ENCODE measurements at regions of chr9 and their contacts with region 1.

Region 1: GRCh38 chr9:130693426-130694191 is at the start of gene EXOSC2:
- DNase-seq: peak; percentile 99
- H3K4me3 ChIP-seq: peak within 1 kb of the TSS; percentile 88
- H3K27ac ChIP-seq: peak within 1 kb of the TSS; percentile 83
- H3K4me1 ChIP-seq: peaks cover 14% of the 10 kb centered on the region
- H3K27me3 ChIP-seq: no peaks in the 10 kb centered on the region
- CTCF ChIP-seq: no peak
- total RNA-seq, gene EXOSC2: 107 and 109 TPM in 2 replicates

Region 2: DNA sequence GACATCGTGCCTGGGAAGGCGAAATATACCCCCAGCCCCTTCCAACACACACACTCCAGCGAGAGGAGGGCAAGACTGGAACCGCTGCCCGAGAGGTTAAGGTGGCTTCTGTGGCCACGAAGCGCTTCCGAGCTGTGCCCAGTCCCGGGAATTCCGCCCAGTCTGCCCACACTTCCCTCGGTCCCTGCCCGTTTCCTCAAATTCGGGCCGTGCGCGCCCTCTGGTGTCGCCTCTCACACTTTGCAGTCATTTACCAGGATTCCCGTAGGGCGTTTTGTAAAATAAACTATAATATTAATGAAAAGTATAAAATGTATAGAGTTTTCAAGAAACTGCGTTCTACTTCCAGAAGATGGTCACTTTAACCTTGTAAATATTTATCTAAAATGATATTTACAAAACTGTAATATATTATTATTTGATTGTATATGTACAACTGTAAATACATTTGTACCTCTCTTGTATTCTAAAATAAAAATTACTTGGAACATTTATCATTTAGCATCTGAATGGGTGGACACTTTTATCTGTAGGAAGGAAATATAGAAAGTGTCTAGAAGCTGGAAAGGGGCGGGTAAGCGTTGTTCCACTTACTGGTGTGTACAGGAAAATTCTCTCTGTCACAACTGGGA is 11.0 kb before region 1 on chr9:
- CTCF ChIA-PET with region 1: interaction called, 10 read pairs
- POLR2A ChIA-PET with region 1: no interaction called
- intact Hi-C with region 1: no loop called
- DNase-seq: peak; percentile 83
- H3K4me3 ChIP-seq: peak overlapping the region; percentile 55
- H3K27ac ChIP-seq: no peak overlapping the region
- H3K4me1 ChIP-seq: peaks cover 13% of the 10 kb centered on the region
- H3K27me3 ChIP-seq: peaks cover 5% of the 10 kb centered on the region
- CTCF ChIP-seq: peak; percentile 91

Region 3: GRCh38 chr9:130860458-130861316 is 167.1 kb after region 1 on chr9:
- CTCF ChIA-PET with region 1: no interaction called
- POLR2A ChIA-PET with region 1: no interaction called
- intact Hi-C with region 1: no loop called
- DNase-seq: peak; percentile 37
- H3K4me3 ChIP-seq: no peak overlapping the region
- H3K27ac ChIP-seq: peak overlapping the region; percentile 24
- H3K4me1 ChIP-seq: peaks cover 10% of the 10 kb centered on the region
- H3K27me3 ChIP-seq: no peaks in the 10 kb centered on the region
- CTCF ChIP-seq: 0 out of 2 replicates have a peak, but pooled peaks have one; percentile 18

Region 4: DNA sequence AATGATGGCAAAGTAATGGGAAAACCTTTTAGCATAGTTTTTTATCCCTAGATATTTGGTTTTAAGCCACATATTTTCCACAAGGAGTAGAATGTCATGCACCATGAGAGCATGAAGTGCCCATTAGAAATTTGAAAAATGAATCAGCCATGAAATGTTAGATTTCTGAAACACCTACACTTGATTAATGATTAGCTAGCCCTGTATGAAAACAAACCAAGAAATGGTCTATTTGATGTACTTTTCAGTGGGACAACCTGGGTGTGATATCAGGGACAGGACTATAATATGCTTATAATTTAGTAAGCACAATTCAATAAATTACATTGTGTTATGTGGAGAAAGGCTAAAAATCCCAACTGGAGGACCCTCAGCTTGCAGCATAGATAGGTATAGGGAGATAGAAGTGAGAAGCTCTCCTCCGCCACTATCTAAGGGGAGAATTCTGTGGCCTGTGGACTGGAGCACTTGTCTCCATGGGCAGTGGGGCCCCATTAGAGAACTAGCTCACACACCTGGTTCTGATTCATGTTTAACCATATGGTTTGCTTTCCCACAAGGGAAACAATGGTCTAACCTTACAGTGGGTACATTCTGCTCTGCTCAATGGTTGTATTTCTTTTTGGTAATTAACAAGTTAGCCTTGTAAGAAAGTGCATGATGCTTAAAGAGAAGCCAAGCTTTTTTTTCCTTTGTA is 467.0 kb after region 1 on chr9:
- CTCF ChIA-PET with region 1: no interaction called
- POLR2A ChIA-PET with region 1: interaction called, 18 read pairs
- intact Hi-C with region 1: no loop called
- DNase-seq: no peak
- H3K4me3 ChIP-seq: no peak overlapping the region
- H3K27ac ChIP-seq: no peak overlapping the region
- H3K4me1 ChIP-seq: no peaks in the 10 kb centered on the region
- H3K27me3 ChIP-seq: no peaks in the 10 kb centered on the region
- CTCF ChIP-seq: no peak